Endothelial cell of umbilical vein (primary cell): ENCODE measurements at regions of chr9 and their contacts with region 1.

Region 1: GRCh38 chr9:21434202-21435014 is 5.8 kb upstream of the IFNA1 start:
- DNase-seq: peak; percentile 68
- H3K4me3 ChIP-seq: no peak overlapping the region
- H3K27ac ChIP-seq: no peak overlapping the region
- H3K4me1 ChIP-seq: no peaks in the 10 kb centered on the region
- H3K27me3 ChIP-seq: peaks cover 22 to 56% of the 10 kb centered on the region in 2 experiments
- CTCF ChIP-seq: peak; percentile 41 to 59
- POLR2A ChIP-seq: no peak

Region 2: GRCh38 chr9:21252721-21253547 is 181.5 kb before region 1 on chr9:
- CTCF ChIA-PET with region 1: interaction called, 18 read pairs
- POLR2A ChIA-PET with region 1: no interaction called
- dilution Hi-C with region 1: no loop called
- intact Hi-C with region 1: no loop called
- DNase-seq: peak; percentile 79
- H3K4me3 ChIP-seq: no peak overlapping the region
- H3K27ac ChIP-seq: no peak overlapping the region
- H3K4me1 ChIP-seq: peaks cover 3% of the 10 kb centered on the region
- H3K27me3 ChIP-seq: peaks cover 34 to 51% of the 10 kb centered on the region in 2 experiments
- CTCF ChIP-seq: peak; percentile 29 to 48
- POLR2A ChIP-seq: no peak

Region 3: DNA sequence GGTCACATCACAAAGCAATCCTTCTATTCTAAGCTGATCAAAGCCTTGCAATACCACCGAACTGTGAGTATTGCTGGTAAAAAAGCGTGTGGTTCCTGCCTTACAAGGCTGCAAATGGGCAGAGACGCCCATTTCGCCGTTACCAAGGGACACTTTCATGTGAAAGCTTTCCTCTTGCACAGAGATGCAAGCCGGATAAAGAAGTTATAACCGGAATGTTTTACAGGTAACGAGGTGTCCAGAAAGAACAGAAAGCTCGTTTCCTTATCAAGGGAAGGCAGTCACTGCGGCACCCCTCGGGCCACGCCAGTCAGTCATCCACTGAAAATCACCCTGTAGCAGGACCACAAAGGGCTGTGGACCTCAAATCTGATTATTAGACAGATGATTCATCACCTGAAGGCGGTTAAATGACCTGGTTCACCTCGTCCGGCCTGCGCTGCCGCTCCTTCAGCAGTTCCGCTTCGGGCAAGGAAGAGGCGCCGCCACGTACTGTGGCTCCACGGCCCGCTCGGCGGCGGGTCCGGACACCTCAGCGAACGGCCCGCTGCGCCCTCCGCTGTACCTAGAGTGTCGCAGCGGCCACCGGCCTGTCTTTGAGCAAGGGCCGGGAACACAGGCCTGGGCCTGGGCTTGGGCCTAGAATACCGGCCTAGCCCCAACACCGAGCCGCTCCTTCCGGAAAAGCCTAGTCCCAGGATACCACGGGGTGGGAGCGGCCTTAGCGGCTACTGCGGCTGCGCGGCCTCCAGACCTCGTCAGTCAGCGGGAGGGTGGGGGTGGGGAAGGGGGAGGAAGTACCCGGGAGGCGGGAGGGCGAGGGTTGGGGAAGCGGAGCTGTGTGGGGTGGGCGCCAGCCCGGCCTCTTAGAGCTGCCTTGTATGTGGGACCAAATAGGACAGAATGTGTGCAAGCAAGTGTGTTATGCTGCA is 99.4 kb before region 1 on chr9 and contains the start of gene KLHL9:
- CTCF ChIA-PET with region 1: interaction called, 23 read pairs
- POLR2A ChIA-PET with region 1: no interaction called
- dilution Hi-C with region 1: no loop called
- intact Hi-C with region 1: no loop called
- DNase-seq: peak; percentile 91
- H3K4me3 ChIP-seq: peak within 1 kb of the TSS; percentile 60 to 96 (median 95)
- H3K27ac ChIP-seq: peak within 1 kb of the TSS; percentile 94
- H3K4me1 ChIP-seq: peaks cover 35% of the 10 kb centered on the region
- H3K27me3 ChIP-seq: peaks cover 8 to 12% of the 10 kb centered on the region in 2 experiments
- CTCF ChIP-seq: no peak
- POLR2A ChIP-seq: peak; percentile 74
- total RNA-seq, gene KLHL9: 23.5 and 23.6 TPM in 2 replicates

Region 4: GRCh38 chr9:21465859-21466518 is 31.6 kb after region 1 on chr9:
- CTCF ChIA-PET with region 1: interaction called, 26 read pairs
- POLR2A ChIA-PET with region 1: no interaction called
- dilution Hi-C with region 1: no loop called
- intact Hi-C with region 1: no loop called
- DNase-seq: peak; percentile 88
- H3K4me3 ChIP-seq: no peak overlapping the region
- H3K27ac ChIP-seq: no peak overlapping the region
- H3K4me1 ChIP-seq: no peaks in the 10 kb centered on the region
- H3K27me3 ChIP-seq: no peaks in the 10 kb centered on the region
- CTCF ChIP-seq: peak; percentile 62 to 63
- POLR2A ChIP-seq: no peak

Region 5: GRCh38 chr9:21789541-21790037 is 355.2 kb after region 1 on chr9:
- CTCF ChIA-PET with region 1: interaction called, 51 read pairs
- POLR2A ChIA-PET with region 1: no interaction called
- dilution Hi-C with region 1: no loop called
- intact Hi-C with region 1: loop called (anchors 1 kb)
- DNase-seq: peak; percentile 85
- H3K4me3 ChIP-seq: peak overlapping the region in 1 of 3 experiments; percentile 69
- H3K27ac ChIP-seq: no peak overlapping the region
- H3K4me1 ChIP-seq: no peaks in the 10 kb centered on the region
- H3K27me3 ChIP-seq: peaks cover 5 to 23% of the 10 kb centered on the region in 2 experiments
- CTCF ChIP-seq: peak; percentile 45 to 57
- POLR2A ChIP-seq: no peak

Region 6: GRCh38 chr9:21965401-21965951 is 531.1 kb after region 1 on chr9:
- CTCF ChIA-PET with region 1: no interaction called
- POLR2A ChIA-PET with region 1: interaction called, 11 read pairs
- dilution Hi-C with region 1: no loop called
- intact Hi-C with region 1: no loop called
- DNase-seq: peak; percentile 68
- H3K4me3 ChIP-seq: peak overlapping the region; percentile 34 to 46 (median 40)
- H3K27ac ChIP-seq: no peak overlapping the region
- H3K4me1 ChIP-seq: peaks cover 28% of the 10 kb centered on the region
- H3K27me3 ChIP-seq: peaks cover 57 to 84% of the 10 kb centered on the region in 2 experiments
- CTCF ChIP-seq: peak; percentile 75 to 80
- POLR2A ChIP-seq: no peak